ENCODE measurements at regions of chr10 and their contacts with region 1.

Region 1: GRCh38 chr10:22988581-22989360 is 60.9 kb downstream of the ARMC3 start:
- DNase-seq: peak; percentile 40 to 67 (median 59)
- H3K4me3 ChIP-seq: no peak overlapping the region
- H3K4me3 Mint-ChIP-seq: no peak overlapping the region
- H3K27ac ChIP-seq: no peak overlapping the region
- H3K27ac Mint-ChIP-seq: no peak overlapping the region
- H3K4me1 ChIP-seq: peaks cover 3 to 5% of the 10 kb centered on the region in 2 donors
- H3K4me1 Mint-ChIP-seq: peaks cover 9% of the 10 kb centered on the region
- H3K27me3 ChIP-seq: no peaks in the 10 kb centered on the region
- H3K27me3 Mint-ChIP-seq: peaks cover 0 to 5% (median 1%) of the 10 kb centered on the region in 3 donors
- CTCF ChIP-seq: peak; percentile 96

Region 2: DNA sequence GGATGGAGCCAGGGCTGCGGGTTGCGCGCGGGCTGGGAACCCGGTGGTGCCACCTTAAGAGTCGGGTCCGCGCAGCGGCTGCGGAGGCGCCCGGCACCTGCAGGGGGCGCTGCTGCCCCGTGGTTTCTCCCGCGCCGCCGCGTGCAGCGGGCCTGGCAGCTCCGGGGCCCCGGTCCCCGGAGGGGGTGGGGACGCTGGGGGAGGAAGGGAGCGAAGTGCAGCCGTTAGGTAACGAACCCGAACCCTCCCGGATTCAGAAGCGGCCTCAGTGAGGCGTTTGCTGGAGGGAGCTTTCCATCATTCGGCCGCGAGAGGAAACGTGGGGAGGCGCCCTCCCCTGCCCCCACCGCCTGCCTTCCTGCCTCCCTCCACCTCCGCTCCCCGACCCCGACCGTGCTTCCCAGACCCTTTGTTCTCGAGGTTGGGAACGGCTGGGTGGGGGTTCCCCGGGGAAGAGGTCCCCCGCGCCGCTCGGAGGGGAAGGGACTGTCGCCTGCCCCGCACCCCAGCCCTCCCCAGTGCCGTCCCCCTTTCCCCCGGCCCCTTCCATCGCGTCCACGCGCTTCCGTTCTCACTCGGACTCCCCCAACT is 1492.9 kb before region 1 on chr10:
- intact Hi-C with region 1: loop called in 1 of 2 experiments (anchors 5 kb)
- DNase-seq: peak; percentile 70 to 77 (median 77)
- H3K4me3 ChIP-seq: peak overlapping the region; percentile 52 to 84 (median 59)
- H3K4me3 Mint-ChIP-seq: peak overlapping the region; percentile 85 to 96
- H3K27ac ChIP-seq: no peak overlapping the region
- H3K27ac Mint-ChIP-seq: no peak overlapping the region
- H3K4me1 ChIP-seq: peaks cover 45 to 53% of the 10 kb centered on the region in 2 donors
- H3K4me1 Mint-ChIP-seq: peaks cover 38% of the 10 kb centered on the region
- H3K27me3 ChIP-seq: peaks cover 28 to 60% of the 10 kb centered on the region in 2 donors
- H3K27me3 Mint-ChIP-seq: peaks cover 51 to 74% (median 58%) of the 10 kb centered on the region in 3 donors
- CTCF ChIP-seq: peak; percentile 96

Region 3: DNA sequence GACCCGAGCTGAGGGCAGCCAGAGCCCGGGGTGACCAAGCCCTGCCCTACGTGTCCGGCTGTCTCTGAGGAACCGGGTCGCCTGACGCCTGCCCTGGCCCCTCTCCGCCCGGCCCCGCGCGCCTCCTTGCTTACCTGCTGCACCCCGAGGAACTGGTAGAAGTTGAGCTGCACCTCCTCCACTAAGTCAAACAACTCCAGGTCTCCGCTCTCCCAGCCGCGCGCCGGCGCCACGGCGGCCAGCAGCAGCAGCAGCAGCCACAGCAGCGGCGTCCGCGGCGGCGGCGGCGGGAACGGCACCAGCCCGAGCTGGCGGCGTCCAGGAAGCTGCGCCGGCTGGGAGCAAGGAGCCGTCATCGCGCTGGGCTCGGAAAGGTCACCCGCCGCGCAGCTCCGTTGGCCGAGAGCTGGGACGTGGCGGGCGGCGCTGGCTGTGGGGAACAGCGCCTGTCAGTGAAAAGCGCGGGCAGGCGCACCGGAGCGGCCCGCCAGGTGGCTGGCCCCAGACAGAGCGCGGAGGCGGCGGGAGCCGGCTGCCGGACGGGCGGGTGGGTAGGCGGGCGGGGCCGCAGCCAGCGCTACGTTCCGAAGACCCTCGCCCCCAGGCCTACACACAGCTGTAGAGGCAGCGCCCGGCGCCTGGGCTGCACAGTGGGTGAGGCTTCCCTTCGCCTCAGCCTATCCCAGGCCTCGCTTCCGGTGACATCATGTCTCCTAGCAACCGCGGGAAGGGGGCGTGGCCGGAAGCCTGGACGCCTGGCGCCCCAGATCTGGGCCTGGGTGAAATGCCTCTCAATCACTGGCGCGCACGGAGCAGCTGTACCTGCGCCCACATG is 985.5 kb before region 1 on chr10 and contains the start of gene DNAJC1:
- intact Hi-C with region 1: loop called in 1 of 2 experiments (anchors 5 kb)
- DNase-seq: peak; percentile 92 to 95 (median 93)
- H3K4me3 ChIP-seq: peak within 1 kb of the TSS; percentile 56 to 90 (median 83)
- H3K4me3 Mint-ChIP-seq: peak within 1 kb of the TSS; percentile 92 to 99
- H3K27ac ChIP-seq: peak within 1 kb of the TSS; percentile 85 to 87
- H3K27ac Mint-ChIP-seq: peak within 1 kb of the TSS; percentile 85 to 94 (median 92)
- H3K4me1 ChIP-seq: peaks cover 17 to 24% of the 10 kb centered on the region in 2 donors
- H3K4me1 Mint-ChIP-seq: peaks cover 31% of the 10 kb centered on the region
- H3K27me3 ChIP-seq: no peaks in the 10 kb centered on the region
- H3K27me3 Mint-ChIP-seq: peaks cover 0 to 1% (median 0%) of the 10 kb centered on the region in 3 donors
- CTCF ChIP-seq: peak; percentile 15
- polyA plus RNA-seq, gene DNAJC1: 11.4 to 12.9 (median 12.5) TPM

Region 4: GRCh38 chr10:22010973-22011408 is 977.8 kb before region 1 on chr10:
- intact Hi-C with region 1: loop called in 1 of 2 experiments (anchors 5 kb)
- DNase-seq: peak in 1 of 3 donors; percentile 30
- H3K4me3 ChIP-seq: no peak overlapping the region
- H3K4me3 Mint-ChIP-seq: no peak overlapping the region
- H3K27ac ChIP-seq: no peak overlapping the region
- H3K27ac Mint-ChIP-seq: no peak overlapping the region
- H3K4me1 ChIP-seq: peaks cover 12 to 13% of the 10 kb centered on the region in 2 donors
- H3K4me1 Mint-ChIP-seq: peaks cover 13% of the 10 kb centered on the region
- H3K27me3 ChIP-seq: no peaks in the 10 kb centered on the region
- H3K27me3 Mint-ChIP-seq: peaks cover 0 to 7% (median 0%) of the 10 kb centered on the region in 3 donors
- CTCF ChIP-seq: peak; percentile 74

Region 5: DNA sequence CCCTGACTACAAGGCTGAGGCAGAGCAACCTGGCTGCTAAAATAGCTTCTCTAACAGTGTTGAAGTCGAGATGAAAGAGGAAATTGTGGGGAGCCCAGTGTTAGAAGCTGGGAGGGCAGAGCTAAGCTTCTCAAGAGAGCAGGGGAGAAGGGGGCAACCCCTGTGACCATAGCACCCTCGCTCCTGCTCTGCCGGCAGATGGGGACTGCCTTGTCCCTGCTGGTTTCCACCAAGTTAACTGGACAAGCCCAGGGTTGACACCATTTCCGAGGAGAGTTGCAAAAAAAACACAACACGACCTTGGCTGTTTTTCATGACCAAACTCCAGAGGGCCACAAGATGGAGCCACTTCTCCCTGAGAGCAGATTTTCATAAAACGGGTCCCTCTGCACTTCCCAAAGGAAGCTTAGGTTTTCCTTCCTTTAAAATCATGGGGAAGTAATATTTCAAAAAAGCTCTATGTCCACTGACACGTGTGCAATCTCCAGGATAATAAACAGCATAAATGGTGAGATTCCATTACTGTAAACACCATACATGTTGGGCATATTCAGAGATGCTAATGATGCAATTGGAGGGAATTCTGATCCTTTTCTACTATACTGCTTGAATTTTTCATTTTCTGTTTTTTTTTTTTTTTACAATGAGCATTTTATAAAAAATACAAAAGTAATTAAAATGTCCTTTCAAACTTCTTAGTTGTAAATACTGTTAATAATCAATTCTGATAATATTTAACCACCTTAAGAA is 414.8 kb before region 1 on chr10:
- intact Hi-C with region 1: loop called (anchors 10 kb)
- DNase-seq: peak in 1 of 3 donors; percentile 21
- H3K4me3 ChIP-seq: no peak overlapping the region
- H3K4me3 Mint-ChIP-seq: no peak overlapping the region
- H3K27ac ChIP-seq: peak overlapping the region in 1 of 2 donors; percentile 64
- H3K27ac Mint-ChIP-seq: peak overlapping the region in 4 of 7 donors; percentile 38 to 79 (median 57)
- H3K4me1 ChIP-seq: peaks cover 0 to 4% of the 10 kb centered on the region in 2 donors
- H3K4me1 Mint-ChIP-seq: peaks cover 4% of the 10 kb centered on the region
- H3K27me3 ChIP-seq: no peaks in the 10 kb centered on the region
- H3K27me3 Mint-ChIP-seq: peaks cover 0 to 2% (median 0%) of the 10 kb centered on the region in 3 donors
- CTCF ChIP-seq: peak; percentile 68

Region 6: DNA sequence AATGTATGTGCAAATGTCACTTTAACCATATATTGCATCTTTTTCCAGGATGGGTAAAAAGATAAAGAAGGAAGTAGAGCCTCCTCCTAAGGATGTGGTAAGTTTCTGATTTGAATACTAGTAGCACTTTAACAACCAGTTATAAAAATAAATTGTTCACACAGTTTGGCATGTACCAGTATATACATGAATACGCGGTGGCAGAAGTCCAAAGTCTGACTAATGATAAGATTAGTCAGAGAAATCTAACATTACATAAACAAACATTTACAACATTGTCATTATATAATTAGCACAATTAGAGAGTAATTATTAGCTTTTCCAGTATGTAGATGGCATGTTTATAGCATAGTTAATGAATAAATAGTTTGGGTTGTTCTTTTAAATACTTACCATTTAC is 56.8 kb before region 1 on chr10:
- intact Hi-C with region 1: no loop called
- DNase-seq: no peak
- H3K4me3 ChIP-seq: no peak overlapping the region
- H3K4me3 Mint-ChIP-seq: no peak overlapping the region
- H3K27ac ChIP-seq: no peak overlapping the region
- H3K27ac Mint-ChIP-seq: no peak overlapping the region
- H3K4me1 ChIP-seq: peaks cover 7 to 9% of the 10 kb centered on the region in 2 donors
- H3K4me1 Mint-ChIP-seq: peaks cover 6% of the 10 kb centered on the region
- H3K27me3 ChIP-seq: peaks cover 4% of the 10 kb centered on the region in 2 donors
- H3K27me3 Mint-ChIP-seq: peaks cover 2 to 9% (median 6%) of the 10 kb centered on the region in 3 donors
- CTCF ChIP-seq: no peak

Measured in CD14-positive monocyte (primary cell).